ENCODE measurements at regions of chrX and their contacts with region 1.

Region 1: GRCh38 chrX:69309074-69309792 is 144.0 kb upstream of the PJA1 start:
- DNase-seq: peak; percentile 56

Region 2: GRCh38 chrX:69285401-69285877 is 23.8 kb before region 1 on chrX:
- CTCF ChIA-PET with region 1: interaction called, 3 read pairs
- POLR2A ChIA-PET with region 1: interaction called, 17 read pairs
- DNase-seq: no peak

Region 3: DNA sequence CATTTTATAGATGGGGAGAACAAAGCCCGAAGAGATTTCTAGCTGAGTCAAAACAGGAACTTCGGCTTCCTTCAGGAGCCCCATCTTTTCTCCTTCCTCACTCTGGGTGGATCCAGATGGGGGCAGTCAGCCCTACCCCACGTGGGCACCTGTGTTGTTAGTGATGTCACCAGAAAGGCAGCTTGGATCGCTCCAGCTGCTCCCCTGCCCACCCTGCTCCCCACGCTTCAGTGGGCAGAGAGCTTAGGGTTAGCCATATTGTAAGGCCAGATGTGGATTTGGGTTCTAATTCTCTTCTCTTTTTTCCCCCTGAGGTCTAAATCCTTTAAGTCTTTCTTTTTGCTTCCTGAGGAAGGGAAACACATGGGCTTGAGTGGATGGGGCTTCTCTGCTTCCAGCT is 11.7 kb before region 1 on chrX:
- CTCF ChIA-PET with region 1: no interaction called
- POLR2A ChIA-PET with region 1: no interaction called
- DNase-seq: no peak

Region 4: GRCh38 chrX:69396916-69397315 is 87.7 kb after region 1 on chrX:
- CTCF ChIA-PET with region 1: no interaction called
- POLR2A ChIA-PET with region 1: no interaction called
- DNase-seq: no peak

Measured in HEK293T (cell line).